ENCODE measurements at regions of chr3 and their contacts with region 1.

Region 1: GRCh38 chr3:117019082-117019713 is 309.6 kb downstream of the TUSC7 start:
- DNase-seq: peak in 3 of 4 donors; percentile 32 to 76 (median 59)
- ATAC-seq: peak; percentile 95
- H3K4me3 ChIP-seq: no peak overlapping the region
- H3K27ac ChIP-seq: no peak overlapping the region
- H3K4me1 ChIP-seq: peaks cover 3 to 4% of the 10 kb centered on the region in 2 donors
- H3K27me3 ChIP-seq: no peaks in the 10 kb centered on the region
- CTCF ChIP-seq: peak; percentile 59 to 64

Region 2: GRCh38 chr3:117084739-117085270 is 65.6 kb after region 1 on chr3:
- intact Hi-C with region 1: no loop called
- DNase-seq: no peak
- ATAC-seq: no peak
- H3K4me3 ChIP-seq: no peak overlapping the region
- H3K27ac ChIP-seq: no peak overlapping the region
- H3K4me1 ChIP-seq: no peaks in the 10 kb centered on the region
- H3K27me3 ChIP-seq: no peaks in the 10 kb centered on the region
- CTCF ChIP-seq: no peak

Region 3: GRCh38 chr3:117526470-117527079 is 507.4 kb after region 1 on chr3:
- intact Hi-C with region 1: loop called in 1 of 2 experiments (anchors 10 kb)
- DNase-seq: peak in 2 of 4 donors; percentile 14 to 43
- ATAC-seq: peak; percentile 67
- H3K4me3 ChIP-seq: no peak overlapping the region
- H3K27ac ChIP-seq: no peak overlapping the region
- H3K4me1 ChIP-seq: no peaks in the 10 kb centered on the region
- H3K27me3 ChIP-seq: no peaks in the 10 kb centered on the region
- CTCF ChIP-seq: peak; percentile 45 to 50

Measured in left lung (tissue), 14 donors.